Heart left ventricle (tissue), 16 donors: ENCODE measurements at regions of chr7 and their contacts with region 1.

Region 1: DNA sequence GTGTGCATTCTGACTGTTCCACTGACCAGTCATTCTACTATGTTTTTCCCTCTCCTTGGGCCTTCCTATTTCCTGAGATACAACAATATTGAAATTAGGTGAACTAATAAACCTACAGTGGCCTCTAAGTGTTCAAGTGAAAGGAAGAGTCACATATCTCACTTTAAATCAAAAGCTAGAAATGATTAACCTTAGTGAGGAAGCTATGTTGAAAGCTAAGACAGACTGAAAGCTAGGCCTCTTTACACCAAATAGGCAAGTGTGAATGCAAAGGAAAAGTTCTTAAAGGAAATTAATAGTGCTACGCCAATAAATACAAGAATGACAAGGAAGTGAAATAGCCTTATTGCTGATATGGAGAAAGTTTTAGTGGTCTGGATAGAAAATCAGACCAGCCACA is 5.7 kb upstream of the DYNC1I1 start:
- DNase-seq: no peak
- ATAC-seq: no peak
- H3K4me3 ChIP-seq: no peak overlapping the region
- H3K27ac ChIP-seq: no peak overlapping the region
- H3K4me1 ChIP-seq: no peaks in the 10 kb centered on the region
- H3K27me3 ChIP-seq: no peaks in the 10 kb centered on the region
- CTCF ChIP-seq: no peak
- POLR2A ChIP-seq: no peak

Region 2: DNA sequence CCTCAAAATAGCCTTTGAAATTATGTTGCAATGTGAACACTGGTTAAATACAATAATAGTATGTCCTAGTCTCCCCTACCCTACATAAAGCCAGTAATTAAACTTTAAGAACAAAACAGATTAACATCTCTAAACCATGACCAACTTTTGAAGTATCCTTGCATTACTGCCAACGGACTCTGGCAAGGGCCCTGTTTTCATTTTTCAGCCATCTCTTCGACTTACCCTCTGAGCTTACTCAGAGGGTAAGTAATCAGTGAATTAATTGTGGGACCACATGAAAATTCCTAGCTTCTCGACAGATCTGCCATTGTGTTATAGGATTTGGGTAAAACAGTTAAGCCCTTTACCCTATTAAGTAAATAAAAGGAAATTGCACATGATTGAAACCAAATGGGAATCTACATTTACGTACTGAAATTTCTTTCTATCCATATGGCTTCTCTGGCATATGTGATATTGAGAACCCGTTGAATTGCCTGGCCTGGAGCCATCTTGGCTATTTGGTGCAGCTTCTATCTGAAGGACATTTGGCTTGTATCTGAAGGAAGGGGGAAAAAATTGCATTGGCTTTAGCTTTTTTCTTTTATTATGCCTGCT is 45.3 kb after region 1 on chr7:
- intact Hi-C with region 1: no loop called
- DNase-seq: no peak
- ATAC-seq: no peak
- H3K4me3 ChIP-seq: no peak overlapping the region
- H3K27ac ChIP-seq: no peak overlapping the region
- H3K4me1 ChIP-seq: peaks cover 0 to 7% (median 0%) of the 10 kb centered on the region in 12 donors
- H3K27me3 ChIP-seq: no peaks in the 10 kb centered on the region
- CTCF ChIP-seq: no peak
- POLR2A ChIP-seq: no peak

Region 3: GRCh38 chr7:95828824-95829790 is 62.5 kb after region 1 on chr7:
- intact Hi-C with region 1: loop called in 1 of 10 experiments (anchors 10 kb)
- DNase-seq: no peak
- ATAC-seq: no peak
- H3K4me3 ChIP-seq: no peak overlapping the region
- H3K27ac ChIP-seq: no peak overlapping the region
- H3K4me1 ChIP-seq: no peaks in the 10 kb centered on the region
- H3K27me3 ChIP-seq: no peaks in the 10 kb centered on the region
- CTCF ChIP-seq: no peak
- POLR2A ChIP-seq: no peak